ENCODE measurements at regions of chr6 and their contacts with region 1.

Region 1: GRCh38 chr6:35297601-35298481 is at the start of gene DEF6:
- DNase-seq: peak; percentile 96
- ATAC-seq: peak; percentile 86
- H3K4me3 Mint-ChIP-seq: peak within 1 kb of the TSS; percentile 91
- H3K27ac Mint-ChIP-seq: peak within 1 kb of the TSS; percentile 92
- H3K4me1 Mint-ChIP-seq: peaks cover 54% of the 10 kb centered on the region
- H3K27me3 Mint-ChIP-seq: no peaks in the 10 kb centered on the region
- total RNA-seq, gene DEF6: 153 to 194 TPM

Region 2: DNA sequence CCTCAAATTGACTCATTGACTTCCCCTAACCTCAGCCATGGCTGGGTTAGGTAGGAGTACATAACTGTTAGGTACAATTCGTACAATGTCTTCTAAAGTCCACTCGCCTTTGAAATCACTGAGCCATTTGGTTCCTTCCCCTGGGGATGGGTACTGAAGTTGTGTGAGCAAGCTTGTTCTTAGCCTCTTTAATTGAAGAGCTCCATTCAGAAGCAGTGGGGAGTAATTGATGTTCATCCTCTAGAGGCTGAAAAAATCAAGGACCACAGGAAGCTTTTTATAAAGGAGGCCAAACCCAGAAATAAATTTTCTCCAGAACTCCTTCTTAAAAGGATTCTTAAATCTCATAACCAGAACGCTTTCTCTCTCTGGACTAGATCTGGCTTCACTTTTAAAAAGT is 348.2 kb before region 1 on chr6:
- CTCF ChIA-PET with region 1: no interaction called
- DNase-seq: no peak
- ATAC-seq: no peak
- H3K4me3 Mint-ChIP-seq: no peak overlapping the region
- H3K27ac Mint-ChIP-seq: no peak overlapping the region
- H3K4me1 Mint-ChIP-seq: no peaks in the 10 kb centered on the region
- H3K27me3 Mint-ChIP-seq: no peaks in the 10 kb centered on the region

Region 3: GRCh38 chr6:35318196-35319171 is 20.6 kb after region 1 on chr6:
- CTCF ChIA-PET with region 1: interaction called, 249 read pairs
- DNase-seq: no peak
- ATAC-seq: no peak
- H3K4me3 Mint-ChIP-seq: no peak overlapping the region
- H3K27ac Mint-ChIP-seq: no peak overlapping the region
- H3K4me1 Mint-ChIP-seq: peaks cover 21% of the 10 kb centered on the region
- H3K27me3 Mint-ChIP-seq: no peaks in the 10 kb centered on the region

Region 4: DNA sequence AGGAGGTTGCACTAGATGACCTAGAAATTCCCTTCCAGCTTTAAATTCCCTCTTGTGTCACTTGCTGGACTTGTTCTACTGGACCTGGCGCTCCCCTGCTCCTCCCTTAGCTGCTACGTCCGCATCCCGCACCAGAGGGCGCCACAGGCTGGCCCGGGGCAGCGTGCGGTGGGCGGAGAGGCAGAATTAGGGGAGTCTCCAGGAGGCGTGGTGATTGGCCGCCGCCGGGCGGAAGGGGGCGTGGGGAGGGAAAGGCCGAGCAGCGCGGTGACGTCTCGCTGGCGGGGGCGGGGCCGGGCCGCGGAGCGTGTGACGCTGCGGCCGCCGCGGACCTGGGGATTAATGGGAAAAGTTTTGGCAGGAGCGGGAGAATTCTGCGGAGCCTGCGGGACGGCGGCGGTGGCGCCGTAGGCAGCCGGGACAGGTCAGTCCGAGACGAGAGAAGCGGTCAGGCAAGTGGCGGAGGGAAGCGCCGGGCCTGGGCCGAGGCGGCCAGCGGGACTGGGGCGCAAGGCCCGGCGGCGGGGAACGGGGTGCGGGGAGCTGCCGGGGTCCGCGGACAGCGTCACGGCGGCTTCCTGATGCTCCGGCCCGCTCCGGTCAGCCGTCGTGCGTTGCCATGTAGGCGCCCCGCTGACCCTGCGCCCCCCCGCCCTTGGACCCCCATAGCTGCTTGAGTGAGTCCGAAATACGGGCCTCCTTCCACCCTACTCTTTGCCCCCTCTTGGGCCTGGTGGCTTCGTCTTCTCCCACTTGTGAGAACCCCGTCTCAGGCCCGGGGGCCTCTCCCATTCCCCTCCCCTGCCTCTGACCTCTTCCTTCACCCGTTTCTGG is 44.6 kb after region 1 on chr6 and contains the start of gene PPARD:
- CTCF ChIA-PET with region 1: interaction called, 38 read pairs
- DNase-seq: peak; percentile 98
- ATAC-seq: peak; percentile 99
- H3K4me3 Mint-ChIP-seq: peak within 1 kb of the TSS; percentile 95
- H3K27ac Mint-ChIP-seq: peak within 1 kb of the TSS; percentile 86
- H3K4me1 Mint-ChIP-seq: peaks cover 31% of the 10 kb centered on the region
- H3K27me3 Mint-ChIP-seq: peaks cover 7% of the 10 kb centered on the region
- total RNA-seq, gene PPARD: 16.4 to 18.8 TPM

Region 5: DNA sequence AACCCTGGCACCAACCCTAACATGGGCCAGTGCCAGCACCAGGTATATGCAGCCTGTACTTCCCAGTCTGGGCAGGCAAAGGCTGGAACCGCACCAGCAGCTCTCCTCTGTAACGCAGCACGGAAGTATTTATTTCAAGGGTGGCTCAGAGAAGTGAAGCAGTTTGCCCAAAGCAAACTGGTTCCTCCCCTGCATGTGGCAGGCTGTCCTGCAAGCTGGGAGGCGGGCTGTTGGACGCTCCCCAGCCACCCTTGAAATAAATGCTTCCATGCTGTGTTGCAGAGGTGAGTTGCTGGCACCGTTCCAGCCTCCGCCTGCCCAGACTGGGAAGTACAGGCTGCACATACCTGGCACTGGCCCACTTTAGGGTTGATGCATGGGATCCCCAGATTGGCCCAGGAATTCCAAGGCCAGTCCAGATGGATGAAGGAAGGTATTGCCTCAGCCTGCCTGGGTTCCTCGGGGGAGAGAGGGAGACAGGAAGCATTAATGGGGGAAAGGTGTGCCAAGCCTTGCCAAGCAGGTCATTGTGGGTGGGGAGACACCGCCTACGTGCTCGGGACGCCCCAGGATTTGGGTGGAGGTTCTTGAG is 94.4 kb after region 1 on chr6:
- CTCF ChIA-PET with region 1: no interaction called
- DNase-seq: no peak
- ATAC-seq: no peak
- H3K4me3 Mint-ChIP-seq: no peak overlapping the region
- H3K27ac Mint-ChIP-seq: no peak overlapping the region
- H3K4me1 Mint-ChIP-seq: peaks cover 65% of the 10 kb centered on the region
- H3K27me3 Mint-ChIP-seq: no peaks in the 10 kb centered on the region

Region 6: DNA sequence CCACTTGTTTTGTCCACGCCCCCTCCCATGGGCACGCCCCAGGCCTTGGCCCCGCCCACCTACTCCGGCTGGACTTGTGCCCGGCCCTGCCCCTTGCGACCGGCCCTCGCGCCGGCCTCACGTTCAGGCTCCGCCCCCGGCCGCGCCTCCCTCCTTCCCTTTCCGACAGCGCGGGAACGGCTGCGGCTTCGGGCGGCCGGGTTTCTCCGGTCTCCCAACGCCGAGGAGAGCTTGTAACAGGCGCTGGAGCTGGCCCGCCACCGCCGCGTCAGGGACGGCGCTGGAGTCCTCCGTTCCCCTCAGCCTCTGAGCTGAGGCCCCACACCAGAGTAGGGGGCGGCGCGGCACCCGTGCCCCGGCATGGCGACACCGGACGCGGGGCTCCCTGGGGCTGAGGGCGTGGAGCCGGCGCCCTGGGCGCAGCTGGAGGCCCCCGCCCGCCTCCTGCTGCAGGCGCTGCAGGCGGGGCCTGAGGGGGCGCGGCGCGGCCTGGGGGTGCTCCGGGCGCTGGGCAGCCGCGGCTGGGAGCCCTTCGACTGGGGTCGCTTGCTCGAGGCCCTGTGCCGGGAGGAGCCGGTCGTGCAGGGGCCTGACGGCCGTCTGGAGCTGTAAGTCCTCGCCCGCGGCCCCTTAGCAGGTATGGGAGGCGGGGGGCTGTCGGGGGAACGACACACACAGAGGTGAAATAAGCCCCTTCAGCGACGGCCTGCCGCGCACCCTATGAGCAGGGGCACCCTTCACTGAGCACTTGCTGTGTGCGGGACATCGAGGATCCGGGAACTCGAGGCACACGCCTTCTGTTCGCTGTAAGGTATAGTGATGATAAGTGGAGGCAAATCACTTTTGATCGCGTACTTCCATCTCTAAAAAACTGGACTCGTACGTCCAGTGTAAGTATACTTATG is 154.6 kb after region 1 on chr6 and contains the start of gene FANCE:
- CTCF ChIA-PET with region 1: interaction called, 85 read pairs
- DNase-seq: peak; percentile 96
- ATAC-seq: peak; percentile 88
- H3K4me3 Mint-ChIP-seq: peak within 1 kb of the TSS; percentile 76
- H3K27ac Mint-ChIP-seq: peak within 1 kb of the TSS; percentile 59
- H3K4me1 Mint-ChIP-seq: peaks cover 34% of the 10 kb centered on the region
- H3K27me3 Mint-ChIP-seq: peaks cover 10% of the 10 kb centered on the region
- total RNA-seq, gene FANCE: 15.4 to 16.0 TPM

Region 7: DNA sequence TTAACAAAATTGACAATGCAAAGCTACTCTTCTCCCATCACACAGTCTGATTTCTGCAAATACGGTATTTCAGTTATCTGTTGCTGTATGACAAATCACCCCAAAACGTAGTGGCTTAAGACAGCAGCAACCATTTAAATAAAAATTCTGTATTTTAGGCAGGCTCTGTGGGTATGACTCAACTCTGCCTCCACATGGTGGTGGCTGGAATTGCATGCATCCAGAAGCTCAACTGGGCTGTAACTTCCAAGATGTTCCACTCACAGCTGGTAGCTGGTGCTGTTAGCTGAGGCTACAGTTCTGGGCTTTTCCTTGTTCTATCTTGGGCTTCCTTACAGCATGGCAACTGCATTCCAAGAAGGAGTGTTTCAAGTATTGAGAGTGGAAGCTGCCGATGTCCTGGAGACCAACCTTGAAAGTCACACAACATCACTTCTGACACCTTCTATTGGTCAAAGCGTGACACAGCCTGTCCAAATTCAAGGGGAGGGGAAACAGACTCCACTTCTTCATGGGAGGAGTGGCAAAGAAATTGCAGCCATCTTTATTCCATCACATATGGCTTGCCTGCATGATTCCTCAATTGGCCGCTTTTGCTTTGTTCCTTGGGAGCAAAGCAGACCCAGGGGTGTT is 254.6 kb after region 1 on chr6:
- CTCF ChIA-PET with region 1: interaction called, 10 read pairs
- DNase-seq: peak; percentile 78
- ATAC-seq: peak; percentile 53
- H3K4me3 Mint-ChIP-seq: no peak overlapping the region
- H3K27ac Mint-ChIP-seq: no peak overlapping the region
- H3K4me1 Mint-ChIP-seq: no peaks in the 10 kb centered on the region
- H3K27me3 Mint-ChIP-seq: peaks cover 14% of the 10 kb centered on the region

Region 8: DNA sequence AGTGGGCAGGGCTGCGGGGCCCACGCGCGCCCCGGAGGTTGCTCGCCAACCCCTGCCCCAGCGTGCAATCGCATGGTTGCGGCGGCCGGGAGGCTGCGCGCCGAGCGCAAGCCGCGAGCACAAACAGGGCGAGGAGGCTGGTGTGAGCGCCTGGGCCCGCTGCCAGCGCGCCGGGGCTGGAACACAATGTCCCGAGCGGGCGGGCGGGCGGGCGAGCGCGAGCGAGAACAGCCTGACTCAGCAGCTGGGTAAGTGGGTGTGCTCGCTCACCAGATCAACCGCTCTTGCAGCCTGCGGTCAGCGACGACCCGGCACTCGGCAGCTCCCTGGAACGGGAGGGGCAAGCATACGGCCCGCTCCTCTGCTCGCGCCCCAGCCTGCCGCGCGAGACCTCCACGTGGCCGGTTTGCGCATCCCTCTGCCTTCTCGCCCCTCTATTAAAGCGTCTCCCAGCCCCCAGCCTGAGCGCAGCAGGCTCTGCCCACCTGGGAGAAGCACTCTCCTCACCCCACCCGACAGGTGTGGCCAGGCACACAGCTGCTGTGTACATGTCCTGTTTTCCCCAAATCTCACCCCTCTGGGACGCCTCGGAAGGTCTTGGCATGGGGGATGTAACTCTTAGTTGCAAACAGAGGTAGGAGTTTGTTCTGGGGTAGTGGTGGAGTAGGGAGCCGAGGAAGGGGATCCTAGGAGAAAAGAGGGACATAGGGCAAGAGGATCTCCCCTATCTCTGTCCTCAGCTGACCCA is 430.3 kb after region 1 on chr6:
- CTCF ChIA-PET with region 1: no interaction called
- DNase-seq: peak; percentile 94
- ATAC-seq: peak; percentile 58
- H3K4me3 Mint-ChIP-seq: peak overlapping the region; percentile 64
- H3K27ac Mint-ChIP-seq: peak overlapping the region; percentile 96
- H3K4me1 Mint-ChIP-seq: peaks cover 67% of the 10 kb centered on the region
- H3K27me3 Mint-ChIP-seq: no peaks in the 10 kb centered on the region

Measured in activated CD8-positive, alpha-beta memory T cell treated with anti-CD3 and anti-CD28 coated beads, Interleukin-2, amount 10 ng/mL, durations not matched to agents 7 days and 5 days (primary cell).